Activated B cell treated with CpG ODN at 0.5 μM for 24 hours (primary cell): ENCODE measurements at regions of chr6 and their contacts with region 1.

Region 1: DNA sequence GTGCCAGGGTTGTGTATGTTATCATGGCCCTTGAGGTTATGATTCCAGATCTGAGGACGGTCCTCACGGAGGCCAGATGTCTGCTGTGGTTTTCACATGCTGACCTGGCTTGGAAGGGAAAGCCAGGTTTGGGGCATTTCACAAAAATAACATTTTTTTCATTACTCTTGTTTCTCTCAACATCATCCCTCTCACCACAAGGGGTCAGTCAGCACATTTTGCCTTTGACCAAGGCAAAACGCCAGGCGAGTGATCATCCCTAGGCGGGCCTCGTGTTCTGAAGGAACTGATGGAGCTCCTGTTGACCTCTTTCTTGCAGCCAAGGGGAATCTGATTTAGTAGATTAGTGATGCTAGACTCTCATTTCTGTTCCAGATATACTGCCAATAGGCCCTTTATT is 133.5 kb downstream of the TBC1D7 start:
- DNase-seq: peak; percentile 21
- ATAC-seq: peak; percentile 82
- H3K4me3 Mint-ChIP-seq: no peak overlapping the region
- H3K27ac Mint-ChIP-seq: no peak overlapping the region
- H3K4me1 Mint-ChIP-seq: peaks cover 11% of the 10 kb centered on the region
- H3K27me3 Mint-ChIP-seq: peaks cover 4% of the 10 kb centered on the region
- CTCF ChIP-seq: peak; percentile 55

Region 2: GRCh38 chr6:12911387-12911960 is 283.4 kb before region 1 on chr6:
- CTCF ChIA-PET with region 1: interaction called, 12 read pairs
- POLR2A ChIA-PET with region 1: interaction called, 4 read pairs
- intact Hi-C with region 1: loop called (anchors 2 kb)
- DNase-seq: no peak
- ATAC-seq: no peak
- H3K4me3 Mint-ChIP-seq: no peak overlapping the region
- H3K27ac Mint-ChIP-seq: no peak overlapping the region
- H3K4me1 Mint-ChIP-seq: peaks cover 5% of the 10 kb centered on the region
- H3K27me3 Mint-ChIP-seq: no peaks in the 10 kb centered on the region
- CTCF ChIP-seq: no peak

Region 3: DNA sequence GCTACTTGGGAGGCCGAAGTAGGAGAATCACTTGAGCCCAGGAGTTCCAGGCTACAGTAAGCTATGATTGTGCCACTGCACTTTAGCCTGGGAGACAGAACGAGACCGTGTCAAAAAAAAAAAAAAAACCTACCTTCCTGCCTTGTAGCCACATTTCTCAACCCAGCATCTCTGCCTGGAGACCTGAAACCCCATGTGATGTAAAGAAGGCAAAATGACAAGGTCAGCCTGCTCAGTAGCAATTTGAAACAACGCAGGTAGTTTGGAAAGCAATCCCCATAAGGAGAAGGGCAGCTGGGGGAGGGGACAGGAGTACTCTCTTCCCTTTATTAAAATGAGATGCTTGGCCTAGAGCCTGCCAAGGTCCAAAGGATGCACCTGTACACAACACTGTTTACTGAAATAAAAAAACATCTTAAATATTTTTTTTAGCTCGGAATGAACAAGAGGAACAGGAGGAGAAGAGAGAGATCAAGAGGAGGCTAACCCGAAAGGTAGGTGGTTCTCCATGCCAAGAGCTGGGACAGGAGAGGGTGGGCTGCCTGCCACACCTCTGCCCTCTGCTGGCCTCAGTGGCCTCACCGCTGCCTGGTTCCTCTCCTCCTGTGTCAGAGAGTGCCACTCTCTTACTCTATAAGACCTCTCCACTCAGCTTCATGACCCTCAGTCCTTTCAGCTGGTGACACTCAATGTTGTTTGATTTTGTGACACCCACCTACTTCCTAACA is 83.1 kb after region 1 on chr6:
- CTCF ChIA-PET with region 1: interaction called, 57 read pairs
- POLR2A ChIA-PET with region 1: interaction called, 18 read pairs
- intact Hi-C with region 1: loop called (anchors 1 kb)
- DNase-seq: no peak
- ATAC-seq: peak; percentile 26
- H3K4me3 Mint-ChIP-seq: peak overlapping the region; percentile 58
- H3K27ac Mint-ChIP-seq: peak overlapping the region; percentile 77
- H3K4me1 Mint-ChIP-seq: peaks cover 75% of the 10 kb centered on the region
- H3K27me3 Mint-ChIP-seq: no peaks in the 10 kb centered on the region
- CTCF ChIP-seq: no peak

Region 4: DNA sequence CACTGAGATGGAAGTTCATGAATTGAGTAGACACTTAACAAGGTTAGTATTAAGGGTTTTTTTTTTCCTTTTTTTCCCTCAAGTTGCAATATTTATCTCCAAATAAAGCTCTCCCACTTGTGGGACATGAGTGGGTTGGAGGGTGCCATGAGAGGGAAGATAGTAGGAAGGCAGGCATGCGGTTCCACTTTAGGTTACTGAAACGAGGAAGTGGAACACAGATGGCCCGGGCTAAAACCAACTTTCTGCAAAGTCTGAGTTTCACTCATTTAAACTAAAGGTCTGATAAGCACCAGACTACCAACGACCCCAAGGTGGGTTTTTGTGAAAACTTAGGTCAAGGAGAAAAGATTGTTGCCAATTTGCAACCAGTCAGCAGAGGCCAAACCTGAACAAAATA is 91.3 kb after region 1 on chr6:
- CTCF ChIA-PET with region 1: interaction called, 12 read pairs
- POLR2A ChIA-PET with region 1: interaction called, 4 read pairs
- intact Hi-C with region 1: no loop called
- DNase-seq: no peak
- ATAC-seq: peak; percentile 71
- H3K4me3 Mint-ChIP-seq: peak overlapping the region; percentile 39
- H3K27ac Mint-ChIP-seq: peak overlapping the region; percentile 59
- H3K4me1 Mint-ChIP-seq: peaks cover 67% of the 10 kb centered on the region
- H3K27me3 Mint-ChIP-seq: no peaks in the 10 kb centered on the region
- CTCF ChIP-seq: no peak

Region 5: GRCh38 chr6:13302751-13303667 is 108.2 kb after region 1 on chr6:
- CTCF ChIA-PET with region 1: interaction called, 9 read pairs
- POLR2A ChIA-PET with region 1: interaction called, 3 read pairs
- intact Hi-C with region 1: loop called (anchors 1 kb)
- DNase-seq: no peak
- ATAC-seq: peak; percentile 55
- H3K4me3 Mint-ChIP-seq: peak overlapping the region; percentile 63
- H3K27ac Mint-ChIP-seq: peak overlapping the region; percentile 92
- H3K4me1 Mint-ChIP-seq: peaks cover 79% of the 10 kb centered on the region
- H3K27me3 Mint-ChIP-seq: no peaks in the 10 kb centered on the region
- CTCF ChIP-seq: no peak

Region 6: DNA sequence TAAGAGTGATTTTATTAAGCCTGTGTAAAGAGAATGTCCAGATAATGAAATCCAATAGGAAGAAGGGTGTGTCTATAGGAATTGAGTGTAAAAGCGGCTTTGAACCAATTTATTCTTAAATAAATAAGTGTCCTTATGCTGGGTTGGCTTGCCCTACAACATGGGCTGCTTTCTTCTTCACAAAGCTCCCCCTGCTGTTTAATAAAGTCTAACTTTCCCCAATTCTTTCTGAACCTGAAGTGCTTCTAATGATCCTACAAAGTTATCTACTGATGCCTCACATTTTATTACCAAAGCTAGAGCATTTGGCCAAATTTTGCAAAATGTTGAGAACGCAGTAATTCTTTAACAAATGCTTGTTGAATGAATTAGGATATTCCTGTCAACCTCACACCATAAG is 343.2 kb after region 1 on chr6:
- CTCF ChIA-PET with region 1: no interaction called
- POLR2A ChIA-PET with region 1: no interaction called
- intact Hi-C with region 1: loop called (anchors 10 kb)
- DNase-seq: no peak
- ATAC-seq: peak; percentile 58
- H3K4me3 Mint-ChIP-seq: no peak overlapping the region
- H3K27ac Mint-ChIP-seq: no peak overlapping the region
- H3K4me1 Mint-ChIP-seq: peaks cover 14% of the 10 kb centered on the region
- H3K27me3 Mint-ChIP-seq: no peaks in the 10 kb centered on the region
- CTCF ChIP-seq: no peak